Stomach (tissue), 19 donors: ENCODE measurements at regions of chr2 and their contacts with region 1.

Region 1: DNA sequence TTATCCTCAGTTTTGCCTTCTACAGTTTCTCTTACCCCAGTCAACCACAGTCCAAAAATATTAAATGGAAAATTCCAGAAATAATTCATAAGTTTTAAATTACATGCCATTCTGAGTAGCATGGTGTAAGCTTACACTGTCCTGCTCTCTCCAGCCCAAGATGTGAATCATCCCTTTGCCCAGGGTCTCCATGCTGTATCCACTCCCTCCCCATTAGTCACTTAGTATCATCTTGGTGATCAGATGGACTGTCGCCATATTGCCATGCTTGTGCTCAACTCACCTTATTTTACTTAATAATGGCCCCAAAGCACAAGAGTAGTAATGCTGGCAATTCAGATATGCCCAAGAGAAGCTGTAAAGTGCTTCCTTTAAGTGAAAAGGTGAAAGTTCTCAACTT is 18.5 kb upstream of the CCNT2 start:
- DNase-seq: no peak
- H3K4me3 ChIP-seq: no peak overlapping the region
- H3K27ac ChIP-seq: no peak overlapping the region
- H3K4me1 ChIP-seq: peaks cover 0 to 8% (median 0%) of the 10 kb centered on the region in 4 donors
- H3K27me3 ChIP-seq: no peaks in the 10 kb centered on the region
- CTCF ChIP-seq: no peak
- EP300 ChIP-seq: no peak
- POLR2A ChIP-seq: no peak

Region 2: GRCh38 chr2:134460583-134460998 is 439.6 kb before region 1 on chr2:
- intact Hi-C with region 1: loop called (anchors 10 kb)
- DNase-seq: peak; percentile 78 to 90
- H3K4me3 ChIP-seq: no peak overlapping the region
- H3K27ac ChIP-seq: no peak overlapping the region
- H3K4me1 ChIP-seq: peaks cover 7 to 19% (median 10%) of the 10 kb centered on the region in 4 donors
- H3K27me3 ChIP-seq: peaks cover 0 to 4% (median 0%) of the 10 kb centered on the region in 3 donors
- CTCF ChIP-seq: peak in 6 of 7 experiments; percentile 36 to 83 (median 62)
- EP300 ChIP-seq: no peak
- POLR2A ChIP-seq: no peak